ENCODE measurements at regions of chr11 and their contacts with region 1.

Region 1: DNA sequence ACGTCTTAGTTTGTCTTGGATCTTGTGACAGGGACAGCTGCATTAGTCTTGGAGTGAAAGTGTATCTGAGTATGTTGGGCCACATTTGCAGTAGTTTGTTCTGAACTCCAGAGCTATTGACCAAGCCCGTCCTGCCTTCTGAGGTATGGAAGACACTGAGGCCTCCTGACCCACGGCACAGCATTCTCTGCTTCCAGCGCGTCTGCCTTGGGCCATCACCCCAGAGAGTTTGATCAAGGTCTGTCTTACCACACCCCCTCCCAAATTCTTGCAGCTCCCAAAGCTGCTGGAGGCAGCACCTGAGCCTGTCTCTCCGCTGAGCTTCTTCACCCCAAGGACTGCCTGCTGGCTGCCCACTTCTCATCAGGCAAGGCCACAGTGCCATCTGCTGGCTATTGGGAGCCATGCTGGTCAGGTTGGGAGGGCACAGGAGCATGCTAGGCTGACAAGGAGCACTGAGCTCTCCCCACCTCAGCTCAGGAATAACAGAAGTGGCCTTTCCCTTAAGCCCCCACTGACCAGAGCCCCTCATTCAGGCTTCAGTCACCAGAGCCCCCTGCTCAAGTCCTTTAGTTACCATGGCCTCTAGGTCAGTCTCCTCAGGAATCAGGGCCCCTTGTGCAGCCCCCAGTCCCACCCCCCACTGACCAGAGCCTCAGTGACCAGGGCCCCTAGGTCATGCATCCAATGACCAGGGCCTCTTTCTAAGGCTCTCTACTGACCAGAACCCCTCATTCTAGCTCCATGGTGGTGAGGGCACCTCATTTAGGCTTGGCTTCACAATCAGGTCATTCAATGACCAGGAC is 27.2 kb upstream of the SMPD1 start:
- DNase-seq: peak; percentile 73 to 87
- H3K4me3 ChIP-seq: no peak overlapping the region
- H3K27ac ChIP-seq: no peak overlapping the region
- H3K4me1 ChIP-seq: peaks cover 0 to 4% (median 0%) of the 10 kb centered on the region in 4 experiments; a peak in 1 of 7 replicates
- H3K27me3 ChIP-seq: no peaks in the 10 kb centered on the region
- CTCF ChIP-seq: peak; percentile 97 to 99 (median 99)
- EP300 ChIP-seq: no peak
- POLR2A ChIP-seq: no peak
- RAD21 ChIP-seq: peak; percentile 96 to 98

Region 2: GRCh38 chr11:6251120-6251733 is 111.8 kb before region 1 on chr11:
- CTCF ChIA-PET with region 1: interaction called, 97 read pairs
- POLR2A ChIA-PET with region 1: no interaction called
- DNase-seq: peak; percentile 64 to 90
- H3K4me3 ChIP-seq: no peak overlapping the region
- H3K27ac ChIP-seq: no peak overlapping the region
- H3K4me1 ChIP-seq: no peaks in the 10 kb centered on the region
- H3K27me3 ChIP-seq: peaks cover 0 to 3% (median under 1%) of the 10 kb centered on the region in 4 experiments; a peak in 1 of 7 replicates
- CTCF ChIP-seq: peak; percentile 91 to 99 (median 97)
- EP300 ChIP-seq: no peak
- POLR2A ChIP-seq: no peak
- RAD21 ChIP-seq: peak; percentile 84 to 86

Region 3: GRCh38 chr11:6285019-6285418 is 78.1 kb before region 1 on chr11:
- CTCF ChIA-PET with region 1: interaction called, 13 read pairs
- POLR2A ChIA-PET with region 1: interaction called, 3 read pairs
- DNase-seq: no peak
- H3K4me3 ChIP-seq: no peak overlapping the region
- H3K27ac ChIP-seq: no peak overlapping the region
- H3K4me1 ChIP-seq: peaks cover 0 to 2% (median 0%) of the 10 kb centered on the region in 4 experiments; a peak in 2 of 7 replicates
- H3K27me3 ChIP-seq: peaks cover 12 to 75% (median 45%) of the 10 kb centered on the region in 4 experiments
- CTCF ChIP-seq: no peak
- EP300 ChIP-seq: no peak
- POLR2A ChIP-seq: no peak
- RAD21 ChIP-seq: no peak

Region 4: GRCh38 chr11:6315811-6316425 is 47.2 kb before region 1 on chr11:
- CTCF ChIA-PET with region 1: interaction called, 46 read pairs
- POLR2A ChIA-PET with region 1: no interaction called
- DNase-seq: peak in 1 of 2 experiments; percentile 65
- H3K4me3 ChIP-seq: no peak overlapping the region
- H3K27ac ChIP-seq: no peak overlapping the region
- H3K4me1 ChIP-seq: peaks cover 2 to 24% (median 16%) of the 10 kb centered on the region in 4 experiments
- H3K27me3 ChIP-seq: peaks cover 0 to 3% (median 1%) of the 10 kb centered on the region in 4 experiments; a peak in 1 of 7 replicates
- CTCF ChIP-seq: peak; percentile 92 to 97 (median 96)
- EP300 ChIP-seq: no peak
- POLR2A ChIP-seq: no peak
- RAD21 ChIP-seq: peak; percentile 92 to 95

Region 5: GRCh38 chr11:6402561-6402981 is 39.5 kb after region 1 on chr11:
- CTCF ChIA-PET with region 1: interaction called, 19 read pairs
- POLR2A ChIA-PET with region 1: no interaction called
- DNase-seq: no peak
- H3K4me3 ChIP-seq: no peak overlapping the region
- H3K27ac ChIP-seq: no peak overlapping the region
- H3K4me1 ChIP-seq: peaks cover 8 to 15% (median 10%) of the 10 kb centered on the region in 4 experiments
- H3K27me3 ChIP-seq: no peaks in the 10 kb centered on the region
- CTCF ChIP-seq: no peak
- EP300 ChIP-seq: no peak
- POLR2A ChIP-seq: no peak
- RAD21 ChIP-seq: no peak

Region 6: GRCh38 chr11:6443269-6444003 is 80.4 kb after region 1 on chr11:
- CTCF ChIA-PET with region 1: interaction called, 26 read pairs
- POLR2A ChIA-PET with region 1: no interaction called
- DNase-seq: peak in 1 of 2 experiments; percentile 77
- H3K4me3 ChIP-seq: no peak overlapping the region
- H3K27ac ChIP-seq: no peak overlapping the region
- H3K4me1 ChIP-seq: peaks cover 0 to 4% (median 0%) of the 10 kb centered on the region in 4 experiments; a peak in 2 of 7 replicates
- H3K27me3 ChIP-seq: no peaks in the 10 kb centered on the region
- CTCF ChIP-seq: peak; percentile 79 to 95 (median 92)
- EP300 ChIP-seq: no peak
- POLR2A ChIP-seq: no peak
- RAD21 ChIP-seq: peak; percentile 81 to 82